Calu3 (cell line): ENCODE measurements at regions of chr4 and their contacts with region 1.

Region 1: DNA sequence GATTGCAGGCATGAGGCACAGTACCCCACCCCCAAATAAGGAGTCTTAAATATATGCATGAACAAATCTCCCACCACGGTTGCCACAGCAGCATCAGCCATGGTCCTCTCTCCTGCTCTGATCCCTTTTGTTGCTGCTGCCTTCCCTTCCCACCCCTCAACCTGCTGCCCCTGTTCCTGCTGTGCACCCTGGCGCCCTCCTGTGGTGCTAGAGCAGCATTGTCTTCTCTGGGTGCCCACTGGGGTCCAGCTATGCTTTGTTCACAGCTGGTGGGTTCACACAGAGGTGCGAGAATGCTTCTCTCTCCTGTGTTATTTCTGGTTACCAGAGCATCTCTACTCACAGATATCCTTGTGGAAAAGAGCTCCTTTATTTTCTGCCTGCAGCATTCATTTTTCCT is 116.2 kb downstream of the GATB start:
- DNase-seq: peak; percentile 5
- H3K4me3 Mint-ChIP-seq: no peak overlapping the region
- H3K27ac Mint-ChIP-seq: peak overlapping the region; percentile 13
- H3K4me1 Mint-ChIP-seq: no peaks in the 10 kb centered on the region
- H3K27me3 Mint-ChIP-seq: no peaks in the 10 kb centered on the region
- CTCF ChIP-seq: no peak

Region 2: GRCh38 chr4:150911326-150911725 is 733.3 kb before region 1 on chr4:
- CTCF ChIA-PET with region 1: no interaction called
- intact Hi-C with region 1: loop called (anchors 5 kb)
- DNase-seq: no peak
- H3K4me3 Mint-ChIP-seq: no peak overlapping the region
- H3K27ac Mint-ChIP-seq: no peak overlapping the region
- H3K4me1 Mint-ChIP-seq: no peaks in the 10 kb centered on the region
- H3K27me3 Mint-ChIP-seq: no peaks in the 10 kb centered on the region
- CTCF ChIP-seq: no peak